Activated CD4-positive, alpha-beta memory T cell treated with anti-CD3 and anti-CD28 coated beads, Interleukin-2, amount 10 ng/mL, durations not matched to agents 7 days and 5 days (primary cell): ENCODE measurements at regions of chr6 and their contacts with region 1.

Region 1: DNA sequence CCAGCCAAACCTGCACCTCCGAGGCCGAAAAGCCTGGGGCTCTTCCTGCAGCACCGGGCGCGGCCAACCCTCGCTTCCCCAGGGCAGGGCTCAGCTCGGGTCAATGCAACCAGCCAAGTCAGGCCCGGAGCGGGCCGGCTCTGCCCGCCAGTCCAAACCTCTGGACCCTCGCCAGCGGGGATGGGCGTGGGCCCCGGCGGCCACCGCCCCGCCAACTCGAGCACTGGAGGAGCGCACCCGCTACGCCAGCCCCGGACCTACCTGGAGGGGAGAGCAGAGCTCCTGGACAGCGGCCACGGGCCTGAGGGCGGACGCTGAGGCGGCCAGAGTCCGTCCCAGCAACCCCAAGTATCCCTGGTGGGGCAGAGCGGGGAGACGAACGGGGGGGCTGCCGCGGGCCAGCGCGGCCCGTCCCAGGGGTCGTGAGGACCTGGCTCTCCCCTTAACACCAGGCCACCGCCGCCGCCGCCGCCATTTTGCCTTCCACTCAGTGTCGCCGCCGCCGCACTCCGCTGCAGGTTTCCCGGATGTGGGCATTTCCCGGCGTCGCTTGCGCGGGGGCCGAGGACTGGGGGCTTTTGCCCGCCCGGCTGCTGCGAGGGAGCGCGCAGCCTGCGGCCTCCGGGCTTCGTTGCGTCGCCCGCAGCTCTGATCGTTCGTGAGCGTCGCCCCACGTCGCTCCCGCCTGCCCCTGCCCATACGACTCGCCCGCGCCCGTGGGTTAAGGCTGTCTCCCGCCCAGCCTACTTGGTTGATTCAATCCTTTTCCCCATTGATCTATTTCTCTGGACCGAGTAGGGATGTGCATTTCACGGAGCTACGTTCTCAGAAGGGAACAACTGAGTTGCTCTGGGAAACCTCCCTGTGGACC is at the start of gene LATS1:
- DNase-seq: peak; percentile 94
- H3K4me3 Mint-ChIP-seq: peak within 1 kb of the TSS; percentile 94
- H3K27ac Mint-ChIP-seq: peak within 1 kb of the TSS; percentile 89
- H3K4me1 Mint-ChIP-seq: peaks cover 37% of the 10 kb centered on the region
- H3K27me3 Mint-ChIP-seq: no peaks in the 10 kb centered on the region
- total RNA-seq, gene LATS1: 30.8 to 31.0 TPM

Region 2: GRCh38 chr6:149636116-149636515 is 81.7 kb before region 1 on chr6:
- CTCF ChIA-PET with region 1: no interaction called
- POLR2A ChIA-PET with region 1: no interaction called
- DNase-seq: no peak
- H3K4me3 Mint-ChIP-seq: no peak overlapping the region
- H3K27ac Mint-ChIP-seq: no peak overlapping the region
- H3K4me1 Mint-ChIP-seq: no peaks in the 10 kb centered on the region
- H3K27me3 Mint-ChIP-seq: no peaks in the 10 kb centered on the region

Region 3: DNA sequence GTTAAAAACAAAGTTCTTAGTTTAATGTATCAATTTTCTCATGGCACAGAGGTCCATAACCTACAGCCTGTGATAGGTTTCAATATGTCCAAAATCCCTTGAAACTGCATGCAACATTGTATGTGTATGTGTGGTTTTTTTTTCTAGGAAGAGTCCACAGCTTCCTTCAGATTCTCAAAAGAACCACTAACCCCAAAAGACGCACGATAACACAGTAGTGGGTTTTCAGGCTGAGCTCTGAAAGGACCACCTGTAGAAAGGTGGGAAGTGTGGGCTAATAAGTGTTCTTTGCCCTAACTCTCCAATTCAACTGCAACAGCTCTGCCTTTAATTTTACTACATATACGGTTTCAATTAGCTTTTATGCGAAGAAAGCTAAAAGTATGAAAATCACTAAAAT is 57.8 kb before region 1 on chr6:
- CTCF ChIA-PET with region 1: no interaction called
- POLR2A ChIA-PET with region 1: interaction called, 10 read pairs
- DNase-seq: no peak
- H3K4me3 Mint-ChIP-seq: no peak overlapping the region
- H3K27ac Mint-ChIP-seq: peak overlapping the region; percentile 19
- H3K4me1 Mint-ChIP-seq: peaks cover 13% of the 10 kb centered on the region
- H3K27me3 Mint-ChIP-seq: no peaks in the 10 kb centered on the region

Region 4: GRCh38 chr6:149746147-149746946 is 28.5 kb after region 1 on chr6 and contains the start of gene NUP43:
- CTCF ChIA-PET with region 1: interaction called, 8 read pairs
- POLR2A ChIA-PET with region 1: interaction called, 98 read pairs
- DNase-seq: peak; percentile 95
- H3K4me3 Mint-ChIP-seq: peak within 1 kb of the TSS; percentile 98
- H3K27ac Mint-ChIP-seq: peak within 1 kb of the TSS; percentile 87
- H3K4me1 Mint-ChIP-seq: peaks cover 34% of the 10 kb centered on the region
- H3K27me3 Mint-ChIP-seq: no peaks in the 10 kb centered on the region
- total RNA-seq, gene NUP43: 49.3 to 55.0 TPM

Region 5: GRCh38 chr6:149761438-149761837 is 43.6 kb after region 1 on chr6:
- CTCF ChIA-PET with region 1: no interaction called
- POLR2A ChIA-PET with region 1: no interaction called
- DNase-seq: no peak
- H3K4me3 Mint-ChIP-seq: no peak overlapping the region
- H3K27ac Mint-ChIP-seq: no peak overlapping the region
- H3K4me1 Mint-ChIP-seq: peaks cover 2% of the 10 kb centered on the region
- H3K27me3 Mint-ChIP-seq: no peaks in the 10 kb centered on the region

Region 6: DNA sequence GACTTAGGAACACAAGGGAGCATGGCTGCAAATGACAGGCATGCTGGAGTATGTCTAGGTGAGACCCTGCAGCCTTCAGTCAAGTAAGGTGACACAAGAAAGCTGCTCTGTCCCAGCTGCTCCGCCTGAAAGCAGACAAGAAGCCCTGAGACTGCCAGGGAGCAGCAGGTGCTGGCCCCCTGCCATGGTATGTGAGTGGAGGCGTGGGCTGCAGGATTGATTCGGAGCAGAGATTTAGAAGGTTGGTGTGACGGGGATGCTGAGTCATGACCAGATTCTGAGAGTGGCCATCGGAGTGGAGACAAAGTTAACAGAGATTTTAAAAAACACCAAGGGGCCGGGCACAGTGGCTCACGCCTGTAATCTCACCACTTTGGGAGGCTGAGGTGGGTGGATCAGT is 128.5 kb after region 1 on chr6:
- CTCF ChIA-PET with region 1: no interaction called
- POLR2A ChIA-PET with region 1: no interaction called
- DNase-seq: no peak
- H3K4me3 Mint-ChIP-seq: no peak overlapping the region
- H3K27ac Mint-ChIP-seq: no peak overlapping the region
- H3K4me1 Mint-ChIP-seq: peaks cover 27% of the 10 kb centered on the region
- H3K27me3 Mint-ChIP-seq: peaks cover 12% of the 10 kb centered on the region